Heart left ventricle (tissue), 16 donors: ENCODE measurements at regions of chr18 and their contacts with region 1.

Region 1: GRCh38 chr18:32018331-32019250 is at the start of gene RNF125:
- DNase-seq: peak; percentile 79 to 94 (median 85)
- ATAC-seq: peak; percentile 78 to 97 (median 96)
- H3K4me3 ChIP-seq: peak within 1 kb of the TSS; percentile 45 to 75 (median 68)
- H3K27ac ChIP-seq: peak within 1 kb of the TSS; percentile 62 to 87 (median 77)
- H3K4me1 ChIP-seq: peaks cover 0 to 34% (median 3%) of the 10 kb centered on the region in 12 donors
- H3K27me3 ChIP-seq: no peaks in the 10 kb centered on the region
- CTCF ChIP-seq: peak in 1 of 12 donors; percentile 5
- POLR2A ChIP-seq: peak in 1 of 2 donors; percentile 35
- total RNA-seq, gene RNF125: 1.1 to 12.5 (median 3.8) TPM

Region 2: DNA sequence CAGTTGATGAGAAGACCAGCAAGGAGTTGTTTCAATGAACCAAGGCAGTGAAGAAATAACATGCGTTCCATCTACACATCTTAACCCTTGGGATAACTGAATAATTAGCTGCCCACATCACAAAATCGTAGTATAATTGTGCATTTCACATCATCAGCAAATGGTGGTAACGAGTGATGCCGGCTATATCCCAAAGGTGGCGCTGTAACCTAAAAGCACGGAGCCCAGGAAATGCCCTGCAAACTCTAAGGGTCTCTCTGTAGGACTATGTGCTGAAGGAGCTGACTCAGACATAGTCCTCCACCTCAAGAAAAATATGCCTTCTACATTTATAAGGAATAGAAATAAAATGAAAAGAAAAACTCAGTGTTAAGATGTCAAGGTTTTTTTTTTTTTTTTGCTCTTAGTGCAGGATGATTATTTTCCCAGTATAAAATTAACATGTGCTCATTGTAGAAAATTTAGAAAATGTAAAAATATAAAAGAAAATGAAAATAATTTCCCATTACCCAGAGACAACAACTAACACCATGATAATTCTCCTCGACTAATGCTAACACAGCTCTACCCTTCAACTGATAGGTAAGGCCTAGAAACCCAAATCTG is 594.1 kb before region 1 on chr18:
- intact Hi-C with region 1: no loop called
- DNase-seq: no peak
- ATAC-seq: no peak
- H3K4me3 ChIP-seq: no peak overlapping the region
- H3K27ac ChIP-seq: no peak overlapping the region
- H3K4me1 ChIP-seq: no peaks in the 10 kb centered on the region
- H3K27me3 ChIP-seq: no peaks in the 10 kb centered on the region
- CTCF ChIP-seq: peak in 11 of 12 donors; percentile 15 to 60 (median 38)
- POLR2A ChIP-seq: no peak

Region 3: DNA sequence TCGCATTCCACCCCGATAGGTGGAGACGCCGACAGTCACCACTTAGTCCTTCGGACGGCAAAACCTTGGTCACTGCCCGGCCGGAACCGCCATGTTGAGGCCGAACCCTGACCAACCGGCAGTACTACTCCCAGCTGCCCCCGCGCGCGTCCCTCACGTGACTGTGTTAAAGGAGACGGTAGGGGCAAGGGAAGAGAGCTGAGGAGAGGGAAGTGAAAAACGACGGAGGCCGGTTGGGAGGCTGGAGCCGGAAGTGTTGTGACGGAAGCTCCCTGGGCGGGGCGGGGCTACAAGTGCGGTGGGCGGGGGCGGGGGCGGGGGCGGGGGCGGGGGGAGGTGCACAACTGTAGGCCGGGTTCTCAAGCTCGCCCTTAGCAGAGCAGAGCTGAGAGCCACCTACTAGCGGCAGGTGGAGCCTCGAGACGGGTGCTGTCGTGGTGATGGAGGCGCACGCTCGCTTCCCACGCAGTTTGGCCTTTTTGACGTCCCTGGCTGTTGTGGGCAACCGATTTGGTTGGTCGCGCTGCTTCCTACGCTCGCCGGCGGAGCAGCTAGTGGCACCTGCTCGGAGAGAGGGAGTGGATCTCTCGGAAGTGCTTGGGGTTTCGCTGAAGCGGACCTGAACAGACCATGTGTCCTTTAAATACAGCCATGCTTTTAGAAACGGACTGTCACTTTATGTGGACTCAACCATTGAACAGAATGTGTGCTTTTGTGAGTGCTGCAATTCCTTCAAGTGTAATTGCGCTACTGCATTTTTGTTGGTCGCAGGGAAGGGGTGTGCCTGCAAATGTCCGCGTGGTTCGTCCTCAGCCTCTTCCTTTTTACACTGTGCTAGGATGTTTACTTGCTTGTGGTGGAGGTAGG is 75.4 kb before region 1 on chr18 and contains the start of gene TRAPPC8:
- intact Hi-C with region 1: loop called in 2 of 10 experiments (anchors 2 kb)
- DNase-seq: peak; percentile 98 to 99 (median 98)
- ATAC-seq: peak; percentile 99
- H3K4me3 ChIP-seq: peak within 1 kb of the TSS; percentile 70 to 97 (median 86)
- H3K27ac ChIP-seq: peak within 1 kb of the TSS; percentile 80 to 95 (median 92)
- H3K4me1 ChIP-seq: peaks cover 3 to 45% (median 30%) of the 10 kb centered on the region in 12 donors
- H3K27me3 ChIP-seq: no peaks in the 10 kb centered on the region
- CTCF ChIP-seq: peak in 3 of 12 donors; percentile 28 to 39 (median 37)
- POLR2A ChIP-seq: no peak
- total RNA-seq, gene TRAPPC8: 25.5 to 41.9 (median 31.0) TPM

Region 4: GRCh38 chr18:31983020-31983419 is 35.6 kb before region 1 on chr18:
- intact Hi-C with region 1: loop called in 1 of 10 experiments (anchors 5 kb)
- DNase-seq: peak in 3 of 5 donors; percentile 19 to 49 (median 39)
- ATAC-seq: peak; percentile 86 to 89 (median 88)
- H3K4me3 ChIP-seq: no peak overlapping the region
- H3K27ac ChIP-seq: peak overlapping the region in 10 of 12 donors; percentile 1 to 70 (median 32)
- H3K4me1 ChIP-seq: peaks cover 0 to 18% (median 9%) of the 10 kb centered on the region in 12 donors
- H3K27me3 ChIP-seq: no peaks in the 10 kb centered on the region
- CTCF ChIP-seq: no peak
- POLR2A ChIP-seq: no peak

Region 5: GRCh38 chr18:32072321-32072720 is 53.7 kb after region 1 on chr18:
- intact Hi-C with region 1: loop called in 2 of 10 experiments (anchors 10 kb)
- DNase-seq: no peak
- ATAC-seq: no peak
- H3K4me3 ChIP-seq: no peak overlapping the region
- H3K27ac ChIP-seq: no peak overlapping the region
- H3K4me1 ChIP-seq: no peaks in the 10 kb centered on the region
- H3K27me3 ChIP-seq: no peaks in the 10 kb centered on the region
- CTCF ChIP-seq: peak in 10 of 12 donors; percentile 13 to 48 (median 28)
- POLR2A ChIP-seq: no peak

Region 6: DNA sequence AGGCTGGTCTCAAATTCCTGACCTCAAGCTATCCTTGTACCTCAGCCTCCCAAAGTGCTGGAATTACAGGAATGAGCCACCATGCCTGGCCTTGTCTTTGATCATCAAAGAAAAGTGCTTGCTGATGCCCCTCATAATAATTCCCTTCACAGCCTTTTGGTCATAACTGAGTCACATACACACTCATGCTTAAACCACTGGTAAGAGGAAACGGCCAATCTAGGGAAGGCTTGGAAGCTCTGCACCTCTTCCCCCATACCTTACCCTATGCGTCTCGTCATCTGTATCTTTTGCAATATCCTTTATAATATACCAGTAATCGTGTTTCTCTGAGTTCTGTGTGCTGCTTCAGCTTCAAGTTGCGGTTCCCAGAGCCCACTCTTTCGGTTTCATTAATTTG is 68.3 kb after region 1 on chr18:
- intact Hi-C with region 1: loop called in 4 of 10 experiments (anchors 2 to 5 kb)
- DNase-seq: no peak
- ATAC-seq: no peak
- H3K4me3 ChIP-seq: no peak overlapping the region
- H3K27ac ChIP-seq: peak overlapping the region in 1 of 12 donors; percentile 94
- H3K4me1 ChIP-seq: peaks cover 0 to 50% (median 18%) of the 10 kb centered on the region in 12 donors
- H3K27me3 ChIP-seq: no peaks in the 10 kb centered on the region
- CTCF ChIP-seq: no peak
- POLR2A ChIP-seq: no peak

Region 7: DNA sequence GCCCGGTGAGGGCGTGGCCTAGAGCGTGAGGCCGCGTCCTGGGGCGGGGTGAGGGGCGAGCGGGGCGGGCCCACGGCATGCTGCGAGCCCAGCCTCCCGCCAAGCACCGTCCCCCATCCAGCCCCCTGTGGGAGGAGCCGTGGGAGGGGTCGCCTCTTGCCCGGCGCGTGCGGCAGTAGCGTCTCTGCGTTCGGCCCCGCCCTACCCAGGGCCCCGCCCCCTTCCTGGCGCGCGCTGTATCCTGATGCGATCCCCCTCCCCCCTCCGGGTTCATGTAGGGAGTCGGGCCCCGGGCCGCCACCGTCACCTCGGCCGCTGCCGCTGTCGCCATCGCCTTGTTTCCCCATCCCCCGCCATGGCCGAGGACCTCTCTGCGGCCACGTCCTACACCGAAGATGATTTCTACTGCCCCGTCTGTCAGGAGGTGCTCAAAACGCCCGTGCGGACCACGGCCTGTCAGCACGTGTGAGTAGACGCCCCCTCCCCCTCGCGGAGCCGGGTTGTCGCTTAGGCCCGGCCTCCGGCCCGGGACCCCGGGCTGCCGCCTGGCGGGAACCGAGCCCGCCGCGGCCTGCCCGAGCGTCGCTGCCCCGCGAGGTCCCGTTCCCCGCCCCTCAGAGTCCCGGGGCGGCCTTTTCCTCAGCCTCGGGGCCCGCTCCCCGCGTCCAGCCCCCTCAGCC is 74.0 kb after region 1 on chr18:
- intact Hi-C with region 1: loop called in 3 of 10 experiments (anchors 5 kb)
- DNase-seq: peak; percentile 99 to 100 (median 100)
- ATAC-seq: peak; percentile 98 to 99 (median 98)
- H3K4me3 ChIP-seq: peak overlapping the region; percentile 69 to 96 (median 84)
- H3K27ac ChIP-seq: peak overlapping the region; percentile 95 to 100 (median 99)
- H3K4me1 ChIP-seq: peaks cover 0 to 47% (median 28%) of the 10 kb centered on the region in 12 donors
- H3K27me3 ChIP-seq: no peaks in the 10 kb centered on the region
- CTCF ChIP-seq: no peak
- POLR2A ChIP-seq: peak in 1 of 2 donors; percentile 35